Panc1 (cell line): ENCODE measurements at regions of chr7 and their contacts with region 1.

Region 1: DNA sequence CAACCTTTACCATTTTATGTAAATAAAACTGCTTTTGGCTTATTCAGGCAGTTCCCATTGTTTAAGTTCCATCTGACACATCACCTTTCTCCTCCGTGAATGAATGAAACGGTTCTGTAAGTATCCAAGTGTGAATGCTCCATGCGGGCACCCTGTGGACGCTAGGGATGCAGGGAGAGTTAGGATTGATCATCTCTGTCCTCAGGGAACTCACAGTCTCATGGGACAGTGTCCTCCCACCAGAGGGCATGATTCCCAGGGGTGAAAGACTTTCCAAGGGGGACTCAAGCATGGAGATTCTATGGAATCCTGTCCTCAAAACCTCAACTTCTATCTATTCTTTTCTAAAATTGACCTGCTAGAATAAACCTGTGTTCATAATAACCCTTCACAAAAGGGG is 98.8 kb downstream of the HECW1 start:
- DNase-seq: no peak
- ATAC-seq: no peak
- H3K4me3 ChIP-seq: no peak overlapping the region
- H3K27ac ChIP-seq: no peak overlapping the region
- H3K4me1 ChIP-seq: no peaks in the 10 kb centered on the region
- H3K27me3 ChIP-seq: peaks cover 9% of the 10 kb centered on the region
- CTCF ChIP-seq: no peak

Region 2: GRCh38 chr7:43278088-43278644 is 66.9 kb after region 1 on chr7:
- CTCF ChIA-PET with region 1: no interaction called
- POLR2A ChIA-PET with region 1: no interaction called
- in situ Hi-C with region 1: no loop called
- intact Hi-C with region 1: loop called (anchors 10 kb)
- DNase-seq: no peak
- ATAC-seq: no peak
- H3K4me3 ChIP-seq: no peak overlapping the region
- H3K27ac ChIP-seq: no peak overlapping the region
- H3K4me1 ChIP-seq: no peaks in the 10 kb centered on the region
- H3K27me3 ChIP-seq: peaks cover 5% of the 10 kb centered on the region; the same call in 1 of the 2 replicates
- CTCF ChIP-seq: no peak

Region 3: DNA sequence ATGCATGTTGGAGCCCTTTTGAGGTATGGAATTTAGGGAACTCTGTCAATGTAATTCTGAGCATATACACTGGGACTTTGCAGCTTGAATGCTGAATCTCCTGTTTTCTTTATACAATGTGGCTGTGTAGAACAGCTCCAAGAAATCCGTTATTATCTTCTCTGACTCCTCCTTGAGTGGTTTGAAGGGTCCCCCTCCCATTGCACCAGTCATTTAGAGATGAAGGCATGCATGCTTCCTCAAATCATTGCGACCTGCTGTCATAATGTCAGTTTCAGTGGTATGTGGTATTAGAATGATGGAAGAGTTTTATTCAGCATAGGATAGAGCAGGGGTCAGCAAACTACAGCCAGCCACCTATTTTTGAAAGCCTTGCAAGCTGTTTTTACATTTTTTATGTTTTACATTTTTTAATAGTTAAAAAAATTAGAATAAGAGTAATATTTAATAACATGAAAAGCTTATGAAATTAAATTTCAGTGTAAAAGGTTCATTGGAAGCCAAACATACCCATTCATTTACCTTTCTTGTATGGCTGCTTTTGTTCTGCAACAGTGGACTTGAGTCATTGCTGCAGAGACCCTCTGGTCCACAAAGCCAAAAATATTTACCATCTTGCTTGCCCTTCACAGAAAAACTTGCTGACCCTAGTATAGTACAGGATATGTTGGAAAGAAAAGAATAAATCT is 379.7 kb after region 1 on chr7:
- CTCF ChIA-PET with region 1: no interaction called
- POLR2A ChIA-PET with region 1: no interaction called
- in situ Hi-C with region 1: no loop called
- intact Hi-C with region 1: no loop called
- DNase-seq: no peak
- ATAC-seq: no peak
- H3K4me3 ChIP-seq: no peak overlapping the region
- H3K27ac ChIP-seq: no peak overlapping the region
- H3K4me1 ChIP-seq: peaks cover 36% of the 10 kb centered on the region
- H3K27me3 ChIP-seq: no peaks in the 10 kb centered on the region
- CTCF ChIP-seq: no peak